GM12878 (cell line): ENCODE measurements at regions of chrX and their contacts with region 1.

Region 1: DNA sequence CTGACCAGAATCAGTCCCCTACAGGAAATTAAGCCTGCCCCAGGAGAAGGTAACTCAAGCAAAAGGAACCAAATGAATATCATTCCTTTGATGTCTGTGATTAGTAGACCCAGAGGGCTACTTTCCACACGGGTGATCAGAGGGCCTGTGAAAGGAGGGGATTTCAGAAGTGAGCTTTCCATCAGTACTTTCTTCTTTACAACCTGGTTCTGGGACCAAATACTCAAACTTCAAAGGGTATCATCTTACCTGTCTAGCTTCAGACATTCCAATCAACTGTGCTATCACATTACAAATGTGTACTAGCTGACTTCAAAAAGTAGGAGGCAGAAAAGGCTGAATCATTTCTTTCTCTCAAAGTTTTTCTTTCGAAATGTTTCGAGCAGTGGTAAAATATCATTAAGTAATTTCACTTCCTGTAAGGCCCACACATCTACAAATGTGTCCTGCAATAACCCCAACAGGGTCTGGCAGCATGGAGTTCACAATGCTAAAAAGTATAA is 23.9 kb downstream of the ACSL4 start:
- DNase-seq: peak; percentile 60
- ATAC-seq: peak; percentile 82
- H3K4me3 ChIP-seq: 0 out of 2 replicates have a peak overlapping the region, but pooled peaks have one; percentile 29
- H3K27ac ChIP-seq: peak overlapping the region; percentile 71
- H3K4me1 ChIP-seq: peaks cover 9% of the 10 kb centered on the region
- H3K27me3 ChIP-seq: no peaks in the 10 kb centered on the region
- CTCF ChIP-seq: no peak; a peak in 1 of 6 replicates
- EP300 ChIP-seq: peak in 1 of 2 experiments; percentile 59; a peak in 2 of 4 replicates
- POLR2A ChIP-seq: no peak
- RAD21 ChIP-seq: no peak

Region 2: GRCh38 chrX:109485470-109486340 is 223.5 kb before region 1 on chrX:
- CTCF ChIA-PET with region 1: interaction called, 27 read pairs
- POLR2A ChIA-PET with region 1: no interaction called
- RAD21 ChIA-PET with region 1: interaction called, 8 read pairs
- SMC1A ChIA-PET with region 1: interaction called, 23 read pairs
- in situ Hi-C with region 1: no loop called
- intact Hi-C with region 1: loop called (anchors 5 kb)
- DNase-seq: peak; percentile 34
- ATAC-seq: peak; percentile 84
- H3K4me3 ChIP-seq: no peak overlapping the region
- H3K27ac ChIP-seq: no peak overlapping the region
- H3K4me1 ChIP-seq: no peaks in the 10 kb centered on the region
- H3K27me3 ChIP-seq: no peaks in the 10 kb centered on the region
- CTCF ChIP-seq: peak; percentile 93 to 99 (median 99); a peak in 5 of 6 replicates
- EP300 ChIP-seq: no peak
- POLR2A ChIP-seq: no peak
- RAD21 ChIP-seq: peak; percentile 91

Region 3: GRCh38 chrX:109696146-109696740 is 12.9 kb before region 1 on chrX:
- CTCF ChIA-PET with region 1: interaction called, 11 read pairs
- POLR2A ChIA-PET with region 1: interaction called, 10 read pairs
- RAD21 ChIA-PET with region 1: interaction called, 8 read pairs
- SMC1A ChIA-PET with region 1: interaction called, 11 read pairs
- in situ Hi-C with region 1: no loop called
- intact Hi-C with region 1: no loop called
- DNase-seq: no peak
- ATAC-seq: peak; percentile 68
- H3K4me3 ChIP-seq: no peak overlapping the region
- H3K27ac ChIP-seq: no peak overlapping the region; the same call in 1 of the 2 replicates
- H3K4me1 ChIP-seq: no peaks in the 10 kb centered on the region
- H3K27me3 ChIP-seq: no peaks in the 10 kb centered on the region
- CTCF ChIP-seq: no peak
- EP300 ChIP-seq: no peak
- POLR2A ChIP-seq: no peak
- RAD21 ChIP-seq: no peak

Region 4: GRCh38 chrX:109774706-109775105 is 65.5 kb after region 1 on chrX:
- CTCF ChIA-PET with region 1: interaction called, 7 read pairs
- POLR2A ChIA-PET with region 1: interaction called, 3 read pairs
- RAD21 ChIA-PET with region 1: interaction called, 11 read pairs
- SMC1A ChIA-PET with region 1: interaction called, 24 read pairs
- in situ Hi-C with region 1: no loop called
- intact Hi-C with region 1: loop called (anchors 5 kb)
- DNase-seq: peak; percentile 50
- ATAC-seq: peak; percentile 97
- H3K4me3 ChIP-seq: no peak overlapping the region
- H3K27ac ChIP-seq: 0 out of 2 replicates have a peak overlapping the region, but pooled peaks have one; percentile 12
- H3K4me1 ChIP-seq: peaks cover 6% of the 10 kb centered on the region; the same call in 1 of the 2 replicates
- H3K27me3 ChIP-seq: no peaks in the 10 kb centered on the region
- CTCF ChIP-seq: no peak
- EP300 ChIP-seq: peak; percentile 64 to 85; a peak in 2 of 4 replicates
- POLR2A ChIP-seq: no peak
- RAD21 ChIP-seq: no peak

Region 5: GRCh38 chrX:109793191-109793590 is 84.0 kb after region 1 on chrX:
- CTCF ChIA-PET with region 1: no interaction called
- POLR2A ChIA-PET with region 1: no interaction called
- RAD21 ChIA-PET with region 1: no interaction called
- SMC1A ChIA-PET with region 1: no interaction called
- in situ Hi-C with region 1: no loop called
- intact Hi-C with region 1: no loop called
- DNase-seq: no peak
- ATAC-seq: no peak
- H3K4me3 ChIP-seq: no peak overlapping the region
- H3K27ac ChIP-seq: no peak overlapping the region
- H3K4me1 ChIP-seq: no peaks in the 10 kb centered on the region
- H3K27me3 ChIP-seq: no peaks in the 10 kb centered on the region
- CTCF ChIP-seq: no peak
- EP300 ChIP-seq: no peak
- POLR2A ChIP-seq: no peak
- RAD21 ChIP-seq: no peak

Region 6: DNA sequence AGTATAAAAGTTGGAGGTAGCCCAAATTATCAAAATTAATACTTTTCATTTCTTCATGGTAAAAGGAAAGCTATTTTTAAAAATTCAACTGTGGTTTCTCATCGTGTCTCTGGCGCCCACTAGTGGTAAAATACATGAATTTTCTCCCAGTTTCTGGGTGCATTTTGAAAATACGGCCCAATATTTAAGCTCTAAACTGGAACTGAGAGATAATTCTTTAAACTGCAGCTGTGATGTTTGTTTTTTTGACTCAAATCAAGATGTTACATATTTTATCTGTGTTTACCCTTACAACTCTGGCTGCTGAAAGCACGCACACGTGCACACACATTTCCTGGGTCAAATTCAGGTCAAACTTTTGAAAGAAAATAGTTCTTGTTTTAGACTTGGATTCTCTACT is 147.8 kb after region 1 on chrX:
- CTCF ChIA-PET with region 1: interaction called, 337 read pairs
- POLR2A ChIA-PET with region 1: interaction called, 9 read pairs
- RAD21 ChIA-PET with region 1: interaction called, 257 read pairs
- SMC1A ChIA-PET with region 1: interaction called, 403 read pairs
- in situ Hi-C with region 1: no loop called
- intact Hi-C with region 1: loop called (anchors 1 kb)
- DNase-seq: no peak
- ATAC-seq: peak; percentile 51
- H3K4me3 ChIP-seq: no peak overlapping the region
- H3K27ac ChIP-seq: no peak overlapping the region
- H3K4me1 ChIP-seq: no peaks in the 10 kb centered on the region
- H3K27me3 ChIP-seq: no peaks in the 10 kb centered on the region
- CTCF ChIP-seq: peak; percentile 62 to 76 (median 63)
- EP300 ChIP-seq: 0 out of 4 replicates have a peak, but pooled peaks of 1 of the 2 experiments have one; percentile 34
- POLR2A ChIP-seq: no peak
- RAD21 ChIP-seq: peak; percentile 81

Region 7: DNA sequence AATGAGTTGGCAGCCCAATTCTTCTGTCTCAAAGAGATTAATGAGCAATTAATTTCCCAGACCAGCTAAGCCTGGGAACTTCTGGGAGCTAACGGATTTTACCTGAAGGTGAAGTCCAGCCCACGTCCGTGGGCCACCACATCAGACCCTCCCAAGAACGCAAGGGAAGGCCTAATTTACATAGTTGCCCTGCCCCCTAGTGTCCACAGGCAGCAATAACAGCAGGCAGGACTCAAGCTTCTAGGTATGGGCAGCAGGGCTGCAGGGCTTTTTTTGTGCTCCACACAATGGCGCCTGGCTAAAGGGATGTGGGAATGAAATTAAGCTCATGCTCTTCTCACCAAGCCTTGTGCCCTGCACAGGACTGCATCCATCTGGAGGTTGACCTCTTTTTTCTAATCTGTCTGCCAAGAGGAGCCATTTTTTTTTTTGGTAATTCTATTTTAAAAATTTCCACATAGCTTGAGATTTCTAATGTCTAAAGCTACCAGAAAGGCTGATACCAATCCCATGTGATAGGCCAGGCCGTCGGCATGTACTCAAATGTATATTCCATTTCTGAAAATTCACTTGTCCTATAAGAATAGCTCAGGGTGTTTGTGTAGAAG is 181.8 kb after region 1 on chrX:
- CTCF ChIA-PET with region 1: interaction called, 202 read pairs
- POLR2A ChIA-PET with region 1: interaction called, 6 read pairs
- RAD21 ChIA-PET with region 1: interaction called, 72 read pairs
- SMC1A ChIA-PET with region 1: interaction called, 137 read pairs
- in situ Hi-C with region 1: no loop called
- intact Hi-C with region 1: loop called (anchors 1 kb)
- DNase-seq: no peak
- ATAC-seq: peak; percentile 77
- H3K4me3 ChIP-seq: no peak overlapping the region
- H3K27ac ChIP-seq: no peak overlapping the region
- H3K4me1 ChIP-seq: peaks cover 16% of the 10 kb centered on the region
- H3K27me3 ChIP-seq: no peaks in the 10 kb centered on the region
- CTCF ChIP-seq: peak; percentile 85 to 96 (median 94)
- EP300 ChIP-seq: no peak
- POLR2A ChIP-seq: no peak
- RAD21 ChIP-seq: peak; percentile 81